ENCODE measurements at regions of chr19 and their contacts with region 1.

Region 1: DNA sequence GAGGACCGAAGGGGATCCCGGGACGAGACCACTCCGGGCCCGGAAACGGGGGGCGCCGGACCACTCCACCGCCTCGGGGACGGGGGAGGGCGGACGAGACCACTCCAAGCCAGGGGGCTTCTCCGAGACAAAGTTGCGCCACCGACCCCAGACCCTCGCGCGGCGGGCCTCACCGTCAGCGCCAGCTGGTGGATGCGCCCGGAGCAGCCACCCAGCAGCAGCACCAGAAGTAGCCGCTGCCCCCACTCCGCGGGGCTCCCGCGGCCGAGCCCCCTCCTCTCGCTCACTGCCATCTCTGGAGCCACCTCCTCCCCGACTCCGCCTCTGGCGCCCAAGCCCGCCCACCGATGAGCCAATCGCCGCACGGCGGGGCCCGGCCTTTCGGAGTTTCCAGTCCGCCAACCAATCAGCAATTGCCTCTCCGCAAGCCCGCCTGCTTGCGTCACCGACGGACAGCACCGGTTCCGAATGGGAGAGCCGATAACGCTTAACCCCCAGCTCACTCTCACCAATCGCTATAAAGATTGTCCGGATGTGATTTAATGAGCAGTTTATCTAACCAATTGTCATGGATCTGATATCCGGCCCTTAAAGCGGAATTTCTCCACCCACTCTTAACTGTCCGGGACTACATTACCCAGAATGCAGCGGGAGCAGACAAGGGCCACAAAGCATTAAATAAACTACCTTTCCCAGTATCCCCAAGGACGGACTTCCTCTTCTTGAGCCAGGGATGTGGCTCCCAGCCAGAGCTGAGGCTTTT is at the start of gene GPR108:
- DNase-seq: peak; percentile 100
- H3K4me3 ChIP-seq: peak within 1 kb of the TSS; percentile 63
- H3K27ac ChIP-seq: peak within 1 kb of the TSS; percentile 98
- H3K4me1 ChIP-seq: peaks cover 35% of the 10 kb centered on the region
- H3K27me3 ChIP-seq: no peaks in the 10 kb centered on the region
- CTCF ChIP-seq: no peak
- total RNA-seq, gene GPR108: 36.4 and 37.4 TPM in 2 replicates

Region 2: DNA sequence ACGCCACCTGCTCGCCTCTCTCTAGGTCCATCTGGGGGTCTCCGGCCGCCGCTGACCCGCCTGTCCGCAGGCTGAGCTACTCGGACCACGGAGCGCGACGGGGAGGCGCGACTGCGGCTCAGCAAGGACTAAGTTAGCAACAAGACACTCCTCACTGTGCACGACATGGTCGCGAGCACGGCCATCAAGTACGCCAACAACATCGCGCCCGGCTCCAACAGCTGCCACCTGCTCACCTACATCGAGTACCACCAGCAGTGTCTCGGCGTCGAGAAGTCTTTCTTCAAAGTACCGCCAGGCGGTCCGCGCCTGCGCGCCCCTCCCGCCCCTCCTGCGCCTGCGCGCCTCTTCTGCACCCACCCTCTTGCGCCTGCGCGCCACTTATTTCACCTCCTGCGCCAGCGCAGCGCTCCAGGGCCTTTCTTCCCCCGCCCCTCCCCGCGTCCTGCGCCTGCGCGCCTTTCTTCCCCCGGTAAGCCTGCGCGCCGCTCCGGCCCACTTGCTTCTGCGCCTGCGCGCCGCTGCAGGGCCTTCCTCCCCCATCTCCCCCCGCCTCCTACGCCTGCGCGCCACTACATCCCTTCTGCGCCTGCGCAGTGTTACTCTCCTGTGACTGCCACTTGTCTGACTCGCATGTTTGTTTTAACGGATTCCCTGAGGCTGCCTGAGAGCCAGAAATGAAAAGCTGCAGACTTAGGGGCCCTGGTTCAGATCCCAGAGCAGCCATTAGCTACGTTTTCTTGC is 538.1 kb before region 1 on chr19:
- CTCF ChIA-PET with region 1: interaction called, 11 read pairs
- POLR2A ChIA-PET with region 1: no interaction called
- intact Hi-C with region 1: no loop called
- DNase-seq: peak; percentile 99
- H3K4me3 ChIP-seq: peak overlapping the region; percentile 66
- H3K27ac ChIP-seq: peak overlapping the region; percentile 77
- H3K4me1 ChIP-seq: no peaks in the 10 kb centered on the region
- H3K27me3 ChIP-seq: no peaks in the 10 kb centered on the region
- CTCF ChIP-seq: no peak

Region 3: DNA sequence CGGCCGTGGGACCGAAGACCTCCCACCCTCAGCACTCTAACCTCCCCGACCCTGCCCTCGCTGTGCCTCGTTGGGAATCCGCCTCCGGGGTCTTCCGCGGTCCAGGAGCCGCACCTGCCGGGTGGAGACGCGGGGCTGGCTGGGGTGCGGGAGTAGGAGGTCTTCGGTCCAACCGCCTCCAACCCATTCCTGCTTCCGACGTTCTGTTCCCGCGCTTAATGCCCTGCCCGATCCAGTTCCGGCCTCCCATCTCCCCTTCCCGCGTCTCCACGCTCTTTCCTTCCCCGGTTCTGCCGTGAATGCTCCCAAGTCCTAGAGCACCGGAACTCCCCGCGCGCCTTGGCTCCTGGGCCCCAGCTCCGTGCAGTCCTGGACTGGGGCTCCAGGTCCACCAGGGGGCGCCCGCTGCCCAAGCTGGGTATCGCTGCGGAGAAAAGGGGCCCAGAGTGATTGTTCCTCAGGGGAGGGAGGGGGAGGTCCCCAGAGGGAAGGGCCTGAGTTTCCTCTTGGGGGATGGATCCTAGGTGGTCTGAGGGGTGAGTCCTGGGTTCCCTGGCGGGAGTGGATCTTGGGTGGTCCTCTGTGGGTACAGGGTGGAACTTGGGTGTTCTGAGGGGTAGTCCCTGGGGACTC is 220.7 kb before region 1 on chr19:
- CTCF ChIA-PET with region 1: interaction called, 3 read pairs
- POLR2A ChIA-PET with region 1: no interaction called
- intact Hi-C with region 1: loop called (anchors 5 kb)
- DNase-seq: peak; percentile 97
- H3K4me3 ChIP-seq: peak overlapping the region; percentile 64
- H3K27ac ChIP-seq: peak overlapping the region; percentile 72
- H3K4me1 ChIP-seq: peaks cover 4% of the 10 kb centered on the region
- H3K27me3 ChIP-seq: no peaks in the 10 kb centered on the region
- CTCF ChIP-seq: peak; percentile 99

Region 4: GRCh38 chr19:6632002-6632621 is 105.4 kb before region 1 on chr19:
- CTCF ChIA-PET with region 1: no interaction called
- POLR2A ChIA-PET with region 1: no interaction called
- intact Hi-C with region 1: loop called (anchors 5 kb)
- DNase-seq: peak; percentile 86
- H3K4me3 ChIP-seq: no peak overlapping the region
- H3K27ac ChIP-seq: no peak overlapping the region
- H3K4me1 ChIP-seq: no peaks in the 10 kb centered on the region
- H3K27me3 ChIP-seq: no peaks in the 10 kb centered on the region
- CTCF ChIP-seq: peak; percentile 93

Region 5: DNA sequence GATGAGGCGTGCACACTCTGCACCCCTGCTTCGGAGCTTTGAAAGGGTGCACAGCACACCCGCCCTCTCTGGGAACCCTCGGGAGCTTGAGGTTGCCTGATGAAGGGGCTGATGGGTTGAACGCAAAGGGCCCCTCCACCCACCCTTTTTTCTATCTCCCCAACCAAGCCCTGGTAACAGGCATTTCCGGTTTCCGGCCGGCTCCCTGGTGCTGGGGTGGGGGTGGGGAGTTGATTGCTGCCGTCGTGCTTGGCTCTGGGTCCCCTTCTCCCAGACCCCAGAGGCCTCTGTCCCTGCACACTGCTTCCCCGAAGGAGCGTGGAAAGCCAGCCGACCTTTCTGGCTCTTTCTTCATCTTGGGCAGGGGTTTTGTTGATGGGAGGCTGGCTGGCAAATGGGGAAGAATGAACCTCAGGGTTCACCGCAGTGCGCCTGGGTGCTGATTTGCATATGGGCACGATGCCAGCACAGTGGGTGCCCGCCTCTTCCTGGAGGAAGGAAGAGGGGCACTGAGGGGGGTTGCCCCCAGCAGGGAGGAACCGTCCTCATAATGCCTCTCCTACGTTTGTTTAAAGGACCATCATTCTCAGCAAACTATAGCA is 64.1 kb after region 1 on chr19:
- CTCF ChIA-PET with region 1: no interaction called
- POLR2A ChIA-PET with region 1: no interaction called
- intact Hi-C with region 1: loop called (anchors 5 kb)
- DNase-seq: peak; percentile 97
- H3K4me3 ChIP-seq: peak overlapping the region; percentile 47
- H3K27ac ChIP-seq: peak overlapping the region; percentile 100
- H3K4me1 ChIP-seq: peaks cover 39% of the 10 kb centered on the region
- H3K27me3 ChIP-seq: no peaks in the 10 kb centered on the region
- CTCF ChIP-seq: no peak